ENCODE measurements at regions of chr17 and their contacts with region 1.

Region 1: DNA sequence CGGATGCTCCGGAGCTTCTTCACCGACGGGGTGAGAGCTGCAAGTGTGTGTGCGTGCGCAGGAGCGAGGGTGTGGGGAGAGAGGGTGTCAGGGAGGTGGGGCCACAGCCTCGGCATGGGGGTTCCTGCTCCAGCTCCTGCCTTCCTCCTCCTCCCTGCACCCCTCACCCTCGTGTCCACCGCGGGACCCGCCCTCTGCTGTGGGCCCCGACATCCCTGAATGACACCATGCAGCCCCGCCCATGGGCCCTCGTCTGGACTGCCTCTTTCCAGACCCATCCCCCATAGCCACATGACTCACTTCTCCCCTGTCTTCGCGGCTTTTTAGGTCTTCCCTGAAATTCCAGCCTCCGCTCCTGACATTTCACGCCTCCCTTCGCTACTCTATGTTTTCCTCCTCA is 41.6 kb downstream of the ARHGAP23 start:
- DNase-seq: no peak
- H3K4me3 ChIP-seq: no peak overlapping the region
- H3K27ac ChIP-seq: no peak overlapping the region
- H3K4me1 ChIP-seq: no peaks in the 10 kb centered on the region
- CTCF ChIP-seq: no peak

Region 2: DNA sequence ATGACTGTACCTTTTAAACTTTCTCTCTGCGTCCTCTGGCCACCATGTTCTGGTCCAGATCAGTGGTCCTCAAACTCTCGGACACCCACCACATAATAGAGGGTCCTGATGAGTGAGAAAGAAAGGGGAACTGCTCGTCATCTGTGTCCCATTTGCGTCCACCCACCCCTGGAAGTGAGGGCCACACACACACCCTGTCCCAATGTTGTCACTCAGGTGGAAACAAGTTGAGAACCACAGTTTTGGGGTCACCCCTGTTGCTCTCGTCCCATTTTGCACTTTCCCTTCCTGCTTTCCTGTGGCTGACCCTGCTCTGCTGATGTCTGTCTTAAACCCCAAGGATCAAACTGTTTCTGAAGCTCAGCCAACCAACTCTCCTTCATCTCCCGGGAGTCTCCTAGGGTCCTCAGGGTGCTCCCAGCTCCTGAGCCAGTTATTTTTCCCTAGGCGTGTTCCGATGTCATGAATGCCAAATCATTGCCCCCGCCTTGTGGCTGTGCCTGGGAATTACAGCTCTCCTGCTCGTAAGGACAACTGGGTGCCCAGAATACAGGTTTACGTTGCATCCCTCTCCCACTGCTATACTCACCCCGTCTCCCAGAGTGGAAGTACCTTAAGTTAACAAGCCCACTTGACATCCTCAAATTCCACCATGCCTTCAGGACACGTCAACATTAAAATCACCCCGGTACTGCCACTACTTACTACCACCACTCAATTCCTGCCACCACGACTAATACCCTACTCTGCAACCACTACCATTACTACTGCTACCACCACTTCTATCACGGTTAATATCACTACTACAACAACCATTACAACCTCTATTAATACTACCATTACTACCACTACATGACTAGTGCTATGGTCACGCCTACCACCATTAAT is 699.0 kb before region 1 on chr17:
- CTCF ChIA-PET with region 1: no interaction called
- POLR2A ChIA-PET with region 1: no interaction called
- intact Hi-C with region 1: no loop called
- DNase-seq: peak; percentile 6
- H3K4me3 ChIP-seq: no peak overlapping the region
- H3K27ac ChIP-seq: no peak overlapping the region
- H3K4me1 ChIP-seq: peaks cover 11% of the 10 kb centered on the region
- CTCF ChIP-seq: peak; percentile 63

Region 3: DNA sequence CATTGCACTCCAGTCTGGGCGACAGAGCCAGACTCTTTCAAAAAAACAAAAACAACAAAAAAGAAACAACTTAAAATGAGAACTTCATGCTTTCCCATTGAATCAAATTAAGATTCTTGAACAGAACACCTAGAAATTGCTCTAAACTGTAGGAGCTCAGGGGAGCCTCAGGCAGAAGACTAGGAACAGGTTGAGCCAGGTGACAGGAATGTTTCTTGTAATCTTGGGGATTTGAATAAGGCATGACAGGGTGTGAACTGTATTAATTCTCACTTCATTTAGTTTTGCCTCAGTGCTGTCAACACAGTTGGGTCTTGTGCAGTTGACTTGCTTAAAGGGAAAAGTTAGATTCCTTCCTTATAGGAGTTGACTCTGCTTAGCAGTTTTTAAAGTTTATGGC is 90.4 kb before region 1 on chr17:
- CTCF ChIA-PET with region 1: no interaction called
- POLR2A ChIA-PET with region 1: no interaction called
- intact Hi-C with region 1: no loop called
- DNase-seq: no peak
- H3K4me3 ChIP-seq: no peak overlapping the region
- H3K27ac ChIP-seq: no peak overlapping the region
- H3K4me1 ChIP-seq: peaks cover 7% of the 10 kb centered on the region
- CTCF ChIP-seq: no peak

Region 4: DNA sequence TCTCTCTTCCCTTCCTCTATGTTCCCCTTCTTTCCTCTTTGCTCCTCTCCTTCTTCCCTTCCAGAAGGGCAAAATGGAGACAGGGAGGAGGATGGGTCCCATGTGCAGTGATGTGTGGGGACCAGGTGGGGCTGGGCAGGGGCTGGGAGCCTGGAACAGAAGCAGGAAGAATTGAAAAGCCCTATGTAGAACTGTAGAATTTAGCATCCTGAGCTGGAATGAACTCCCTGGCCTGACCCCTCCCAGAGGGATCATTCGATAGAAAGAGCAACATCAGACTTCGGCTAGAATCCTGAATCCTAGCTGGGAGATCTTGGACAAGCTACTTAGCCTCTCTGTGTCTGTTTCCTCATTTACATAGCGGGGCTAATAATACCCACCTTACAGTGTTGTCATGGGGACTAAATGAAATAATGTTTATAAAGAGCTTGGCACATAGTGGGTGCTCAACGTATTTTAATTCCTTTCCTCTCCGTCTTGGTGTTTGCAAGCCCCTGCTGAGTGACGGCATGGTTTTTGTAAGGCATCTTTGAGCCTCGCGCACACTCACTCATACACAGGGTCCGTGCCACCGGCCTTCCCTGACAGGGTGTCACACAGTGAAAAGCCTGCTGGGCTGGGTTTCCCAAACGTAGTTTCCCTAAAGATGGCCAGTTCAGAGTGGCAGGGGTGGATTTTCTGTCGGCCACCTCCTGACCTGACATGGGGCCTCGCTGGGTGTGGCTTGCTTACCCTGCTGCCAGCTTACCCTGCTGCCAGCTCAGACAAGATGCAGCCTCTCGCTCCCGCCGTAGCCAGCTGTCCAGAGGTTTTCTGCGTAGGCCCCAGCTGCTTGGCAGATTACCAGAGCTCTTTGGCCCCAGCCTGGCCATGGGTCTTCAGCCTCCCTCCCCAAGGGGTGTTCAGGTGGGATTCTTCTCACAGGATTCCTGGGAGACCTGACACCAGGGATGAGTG is 47.7 kb before region 1 on chr17:
- CTCF ChIA-PET with region 1: no interaction called
- POLR2A ChIA-PET with region 1: no interaction called
- intact Hi-C with region 1: loop called (anchors 2 kb)
- DNase-seq: no peak
- H3K4me3 ChIP-seq: peak overlapping the region; percentile 14
- H3K27ac ChIP-seq: no peak overlapping the region
- H3K4me1 ChIP-seq: peaks cover 58% of the 10 kb centered on the region
- CTCF ChIP-seq: no peak